Posterior cingulate gyrus (tissue), 11 donors: ENCODE measurements at regions of chr6 and their contacts with region 1.

Region 1: DNA sequence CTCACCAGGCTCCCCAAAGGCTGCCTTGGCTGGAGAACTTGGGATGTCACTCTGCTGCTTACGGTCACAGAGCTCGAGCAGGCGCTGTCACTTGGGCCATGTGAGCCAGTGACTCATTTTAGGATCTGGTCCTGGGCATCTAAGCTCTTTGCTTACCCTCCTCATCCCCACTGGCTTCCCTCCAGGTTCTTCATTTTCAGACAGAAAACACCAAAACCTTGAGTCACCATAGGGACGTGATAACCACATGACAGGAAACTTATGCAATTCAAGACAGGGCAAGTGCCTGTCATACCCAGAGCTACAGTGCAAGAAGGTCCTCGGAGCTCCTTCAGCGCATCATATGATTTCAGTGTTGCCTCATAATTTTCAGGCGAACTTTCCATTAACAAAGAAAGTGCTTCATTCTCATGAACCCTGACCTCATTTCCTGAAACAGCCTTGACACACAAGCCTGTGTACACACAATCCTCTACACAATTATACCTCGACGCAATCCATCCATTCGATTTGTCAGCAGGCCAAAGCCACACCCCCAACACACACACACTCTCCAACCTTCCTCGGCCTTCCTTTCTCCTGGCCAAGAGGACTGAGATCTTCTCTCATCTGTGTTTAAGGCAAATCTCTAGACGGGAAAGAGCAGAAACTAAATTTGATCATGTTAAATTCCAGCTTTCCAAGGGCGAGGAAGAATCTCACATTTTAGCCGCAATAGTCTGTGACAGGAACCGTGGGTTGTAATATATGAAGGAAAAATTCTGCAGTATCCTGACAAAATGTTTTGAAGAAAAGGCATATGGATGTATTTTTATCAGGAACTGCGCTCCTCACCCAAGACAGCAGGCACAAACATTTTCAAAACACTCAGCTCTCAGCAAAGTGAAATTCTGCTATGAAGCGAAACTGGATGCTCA is 25.3 kb downstream of the TBC1D7 start:
- DNase-seq: peak in 4 of 10 donors; percentile 29 to 91 (median 58)

Region 2: GRCh38 chr6:12957321-12958051 is 345.5 kb before region 1 on chr6:
- intact Hi-C with region 1: loop called (anchors 2 kb)
- DNase-seq: peak; percentile 60 to 96 (median 70)

Region 3: GRCh38 chr6:13012977-13013680 is 289.9 kb before region 1 on chr6:
- intact Hi-C with region 1: loop called (anchors 10 kb)
- DNase-seq: peak; percentile 29 to 91 (median 58)